Activated CD4-positive, alpha-beta T cell treated with anti-CD3 and anti-CD28 coated beads for 36 hours (primary cell): ENCODE measurements at regions of chr5 and their contacts with region 1.

Region 1: GRCh38 chr5:112860929-112861637 is at the start of gene SRP19:
- DNase-seq: peak; percentile 95
- ATAC-seq: peak; percentile 95
- H3K4me3 Mint-ChIP-seq: peak within 1 kb of the TSS; percentile 97
- H3K27ac Mint-ChIP-seq: peak within 1 kb of the TSS; percentile 98
- H3K4me1 Mint-ChIP-seq: peaks cover 32% of the 10 kb centered on the region
- H3K27me3 Mint-ChIP-seq: peaks cover 9% of the 10 kb centered on the region
- total RNA-seq, gene SRP19: 47.6 to 49.4 TPM

Region 2: DNA sequence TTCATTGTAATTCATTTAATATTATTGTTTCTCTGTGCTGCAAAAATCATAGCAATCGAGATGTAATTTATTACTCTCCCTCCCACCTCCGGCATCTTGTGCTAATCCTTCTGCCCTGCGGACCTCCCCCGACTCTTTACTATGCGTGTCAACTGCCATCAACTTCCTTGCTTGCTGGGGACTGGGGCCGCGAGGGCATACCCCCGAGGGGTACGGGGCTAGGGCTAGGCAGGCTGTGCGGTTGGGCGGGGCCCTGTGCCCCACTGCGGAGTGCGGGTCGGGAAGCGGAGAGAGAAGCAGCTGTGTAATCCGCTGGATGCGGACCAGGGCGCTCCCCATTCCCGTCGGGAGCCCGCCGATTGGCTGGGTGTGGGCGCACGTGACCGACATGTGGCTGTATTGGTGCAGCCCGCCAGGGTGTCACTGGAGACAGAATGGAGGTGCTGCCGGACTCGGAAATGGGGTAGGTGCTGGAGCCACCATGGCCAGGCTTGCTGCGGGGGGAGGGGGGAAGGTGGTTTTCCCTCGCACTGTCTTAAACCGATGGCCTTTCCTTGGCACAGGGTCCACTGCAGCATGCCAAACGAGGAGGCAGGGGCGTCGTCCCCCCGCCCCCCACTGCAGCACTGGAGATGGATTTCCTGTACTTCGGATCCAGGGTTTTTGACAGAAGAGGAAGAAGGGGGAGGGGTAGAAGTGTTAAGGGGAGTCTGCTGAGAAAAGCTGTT is 123.5 kb before region 1 on chr5 and contains the start of gene APC:
- CTCF ChIA-PET with region 1: no interaction called
- POLR2A ChIA-PET with region 1: no interaction called
- intact Hi-C with region 1: loop called in 1 of 2 experiments (anchors 1 kb)
- DNase-seq: peak; percentile 92
- ATAC-seq: peak; percentile 99
- H3K4me3 Mint-ChIP-seq: peak within 1 kb of the TSS; percentile 93
- H3K27ac Mint-ChIP-seq: peak within 1 kb of the TSS; percentile 83
- H3K4me1 Mint-ChIP-seq: peaks cover 16% of the 10 kb centered on the region
- H3K27me3 Mint-ChIP-seq: no peaks in the 10 kb centered on the region
- total RNA-seq, gene APC: 20.1 to 22.3 TPM

Region 3: GRCh38 chr5:112779531-112779930 is 81.6 kb before region 1 on chr5:
- CTCF ChIA-PET with region 1: no interaction called
- POLR2A ChIA-PET with region 1: no interaction called
- intact Hi-C with region 1: no loop called
- DNase-seq: no peak
- ATAC-seq: no peak
- H3K4me3 Mint-ChIP-seq: no peak overlapping the region
- H3K27ac Mint-ChIP-seq: no peak overlapping the region
- H3K4me1 Mint-ChIP-seq: peaks cover 3% of the 10 kb centered on the region
- H3K27me3 Mint-ChIP-seq: no peaks in the 10 kb centered on the region

Region 4: DNA sequence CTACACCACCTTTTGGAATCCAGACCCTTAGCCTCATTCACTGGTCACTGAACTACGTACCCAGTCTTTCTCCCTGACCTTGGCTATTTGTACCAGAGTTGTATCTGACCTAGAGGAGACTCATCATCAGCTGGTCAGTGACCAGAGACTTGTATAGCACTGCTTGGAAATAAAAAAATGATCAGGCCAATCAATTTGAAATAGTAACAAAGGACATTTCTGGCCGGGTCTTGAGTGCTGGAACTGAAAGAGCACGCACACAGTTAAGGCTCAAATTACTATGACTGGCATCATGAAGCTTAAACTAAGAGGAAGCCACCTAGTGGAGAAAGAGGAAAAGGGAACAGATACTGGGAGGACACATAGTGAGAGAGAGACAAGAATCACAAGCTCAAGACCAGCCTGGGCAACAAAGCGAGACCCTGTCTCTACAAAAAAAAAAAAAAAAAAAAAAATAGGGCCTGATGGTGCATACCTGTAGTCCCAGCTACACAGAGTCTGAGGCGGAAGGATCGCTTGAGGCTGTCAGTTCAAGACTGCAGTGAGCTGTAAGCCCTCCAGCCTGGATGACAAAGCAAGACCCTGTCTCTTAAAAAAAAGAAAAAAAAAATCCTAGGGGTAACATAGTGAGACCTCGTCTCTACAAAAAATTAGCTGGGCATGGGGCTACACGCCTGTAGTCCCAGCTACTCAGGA is 12.8 kb before region 1 on chr5:
- CTCF ChIA-PET with region 1: interaction called, 22 read pairs
- POLR2A ChIA-PET with region 1: interaction called, 4 read pairs
- intact Hi-C with region 1: no loop called
- DNase-seq: peak; percentile 17
- ATAC-seq: peak; percentile 100
- H3K4me3 Mint-ChIP-seq: no peak overlapping the region
- H3K27ac Mint-ChIP-seq: peak overlapping the region; percentile 81
- H3K4me1 Mint-ChIP-seq: peaks cover 4% of the 10 kb centered on the region
- H3K27me3 Mint-ChIP-seq: no peaks in the 10 kb centered on the region

Region 5: DNA sequence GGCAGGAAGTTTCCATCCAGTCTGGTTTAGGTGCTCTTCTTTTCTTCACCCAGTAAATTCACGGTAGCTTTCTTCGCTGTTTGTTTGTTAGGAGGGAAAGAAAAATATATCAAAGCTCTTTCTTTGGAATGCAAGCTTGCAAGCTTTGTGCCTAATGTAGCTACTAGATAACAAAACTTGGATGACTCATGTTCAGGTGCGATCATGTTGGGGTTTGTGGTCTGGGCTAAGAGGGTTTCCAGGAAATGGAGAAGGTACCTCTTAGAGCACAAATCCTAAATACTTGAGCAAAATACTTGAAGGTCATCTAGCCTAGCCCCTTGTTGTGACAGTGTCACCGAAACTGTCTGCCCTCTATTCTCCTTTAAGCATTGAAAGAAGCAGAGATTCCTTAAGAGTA is 17.7 kb after region 1 on chr5:
- CTCF ChIA-PET with region 1: interaction called, 4 read pairs
- POLR2A ChIA-PET with region 1: interaction called, 4 read pairs
- intact Hi-C with region 1: loop called (anchors 1 to 2 kb)
- DNase-seq: peak; percentile 76
- ATAC-seq: peak; percentile 93
- H3K4me3 Mint-ChIP-seq: peak overlapping the region; percentile 19
- H3K27ac Mint-ChIP-seq: peak overlapping the region; percentile 79
- H3K4me1 Mint-ChIP-seq: peaks cover 27% of the 10 kb centered on the region
- H3K27me3 Mint-ChIP-seq: no peaks in the 10 kb centered on the region

Region 6: GRCh38 chr5:112958093-112959088 is 97.3 kb after region 1 on chr5:
- CTCF ChIA-PET with region 1: no interaction called
- POLR2A ChIA-PET with region 1: no interaction called
- intact Hi-C with region 1: loop called (anchors 1 to 2 kb)
- DNase-seq: peak; percentile 60
- ATAC-seq: peak; percentile 91
- H3K4me3 Mint-ChIP-seq: no peak overlapping the region
- H3K27ac Mint-ChIP-seq: no peak overlapping the region
- H3K4me1 Mint-ChIP-seq: peaks cover 36% of the 10 kb centered on the region
- H3K27me3 Mint-ChIP-seq: no peaks in the 10 kb centered on the region

Region 7: DNA sequence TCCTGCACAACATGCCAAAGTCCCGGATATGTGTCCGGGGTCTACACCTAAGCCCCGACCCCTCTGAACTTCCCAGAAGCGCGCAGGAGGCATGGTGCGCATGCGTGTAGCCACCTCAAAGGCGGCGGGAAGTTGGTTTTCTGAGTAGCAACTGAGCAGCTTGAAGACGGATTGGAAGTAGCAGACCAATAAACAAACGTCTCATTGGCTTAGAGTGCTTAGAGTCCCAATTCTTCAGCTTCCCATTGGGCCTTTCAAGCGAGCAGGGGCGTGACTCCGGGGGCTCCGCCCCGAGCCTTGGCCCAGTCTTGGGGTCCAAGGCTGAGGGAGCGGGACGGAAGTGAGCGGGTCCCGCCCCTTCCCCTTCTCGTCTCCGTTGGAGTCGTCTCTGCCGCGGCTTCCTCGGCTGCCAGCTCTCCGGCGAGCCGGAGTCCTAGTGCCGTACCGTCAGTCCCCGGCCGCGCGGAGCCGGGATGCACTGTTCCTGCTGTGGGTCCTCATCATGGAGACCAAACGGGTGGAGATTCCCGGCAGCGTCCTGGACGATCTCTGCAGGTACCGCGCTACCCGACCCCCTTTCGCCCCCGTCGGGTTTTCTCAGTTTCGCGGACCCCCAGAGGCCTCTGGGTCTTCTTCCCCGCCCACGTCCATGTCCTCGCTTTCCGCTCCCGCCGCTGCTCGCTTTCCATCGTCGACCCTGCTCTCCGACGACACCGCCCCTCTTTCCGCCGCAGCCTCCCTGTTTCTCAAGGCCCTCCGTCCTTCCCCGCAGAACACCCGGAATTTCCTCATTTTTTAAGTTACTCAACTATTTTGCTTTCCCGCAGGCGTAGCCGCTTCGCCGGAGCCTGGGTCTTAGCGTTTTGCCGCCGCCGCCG is 115.6 kb after region 1 on chr5 and contains the start of gene DCP2:
- CTCF ChIA-PET with region 1: interaction called, 4 read pairs
- POLR2A ChIA-PET with region 1: interaction called, 6 read pairs
- intact Hi-C with region 1: loop called (anchors 1 kb)
- DNase-seq: peak; percentile 96
- ATAC-seq: peak; percentile 94
- H3K4me3 Mint-ChIP-seq: peak within 1 kb of the TSS; percentile 99
- H3K27ac Mint-ChIP-seq: peak within 1 kb of the TSS; percentile 98
- H3K4me1 Mint-ChIP-seq: peaks cover 39% of the 10 kb centered on the region
- H3K27me3 Mint-ChIP-seq: no peaks in the 10 kb centered on the region
- total RNA-seq, gene DCP2: 94.0 to 101 TPM